ENCODE measurements at regions of chr2 and their contacts with region 1.

Region 1: DNA sequence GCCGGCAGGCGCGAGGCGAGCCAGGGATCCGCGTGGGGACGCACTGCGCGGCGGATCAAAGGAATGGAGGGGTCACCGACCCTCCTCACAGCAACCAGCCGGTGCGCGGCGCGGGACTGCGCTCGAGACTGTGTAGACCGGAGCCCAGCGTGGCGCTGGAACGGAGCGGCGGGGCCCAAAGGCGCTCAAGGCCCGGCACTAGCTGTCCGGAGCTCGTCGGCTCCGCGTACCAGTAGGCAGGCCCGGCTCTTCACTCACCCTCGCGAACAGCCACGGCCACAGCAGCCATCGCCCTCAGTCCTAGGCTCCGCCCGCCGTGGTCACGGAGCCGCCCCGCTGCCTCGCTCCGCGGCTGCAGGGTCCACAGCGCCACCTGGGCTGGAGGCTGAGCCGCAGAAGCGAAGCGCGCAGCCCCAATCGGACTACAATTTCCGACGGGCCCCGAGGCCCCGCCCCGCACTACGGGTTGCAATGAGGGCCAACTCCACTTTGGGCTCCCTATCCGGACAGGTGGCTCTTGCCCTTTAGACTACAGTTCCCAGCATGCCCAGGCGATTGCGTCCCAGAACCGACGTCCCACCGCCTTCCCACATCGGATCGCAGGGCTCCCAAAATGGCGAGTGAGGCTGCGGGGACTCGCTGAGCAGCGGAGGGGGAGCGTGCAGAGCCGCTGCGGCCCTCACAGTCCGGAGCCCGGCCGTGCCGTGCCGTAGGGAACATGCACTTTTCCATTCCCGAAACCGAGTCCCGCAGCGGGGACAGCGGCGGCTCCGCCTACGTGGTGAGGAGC is at the starts of genes EIF2B4 and SNX17:
- H3K4me3 Mint-ChIP-seq: peak within 1 kb of the TSS; percentile 98
- H3K27ac Mint-ChIP-seq: peak within 1 kb of the TSS; percentile 95
- H3K4me1 Mint-ChIP-seq: peaks cover 58% of the 10 kb centered on the region
- H3K27me3 Mint-ChIP-seq: no peaks in the 10 kb centered on the region

Region 2: DNA sequence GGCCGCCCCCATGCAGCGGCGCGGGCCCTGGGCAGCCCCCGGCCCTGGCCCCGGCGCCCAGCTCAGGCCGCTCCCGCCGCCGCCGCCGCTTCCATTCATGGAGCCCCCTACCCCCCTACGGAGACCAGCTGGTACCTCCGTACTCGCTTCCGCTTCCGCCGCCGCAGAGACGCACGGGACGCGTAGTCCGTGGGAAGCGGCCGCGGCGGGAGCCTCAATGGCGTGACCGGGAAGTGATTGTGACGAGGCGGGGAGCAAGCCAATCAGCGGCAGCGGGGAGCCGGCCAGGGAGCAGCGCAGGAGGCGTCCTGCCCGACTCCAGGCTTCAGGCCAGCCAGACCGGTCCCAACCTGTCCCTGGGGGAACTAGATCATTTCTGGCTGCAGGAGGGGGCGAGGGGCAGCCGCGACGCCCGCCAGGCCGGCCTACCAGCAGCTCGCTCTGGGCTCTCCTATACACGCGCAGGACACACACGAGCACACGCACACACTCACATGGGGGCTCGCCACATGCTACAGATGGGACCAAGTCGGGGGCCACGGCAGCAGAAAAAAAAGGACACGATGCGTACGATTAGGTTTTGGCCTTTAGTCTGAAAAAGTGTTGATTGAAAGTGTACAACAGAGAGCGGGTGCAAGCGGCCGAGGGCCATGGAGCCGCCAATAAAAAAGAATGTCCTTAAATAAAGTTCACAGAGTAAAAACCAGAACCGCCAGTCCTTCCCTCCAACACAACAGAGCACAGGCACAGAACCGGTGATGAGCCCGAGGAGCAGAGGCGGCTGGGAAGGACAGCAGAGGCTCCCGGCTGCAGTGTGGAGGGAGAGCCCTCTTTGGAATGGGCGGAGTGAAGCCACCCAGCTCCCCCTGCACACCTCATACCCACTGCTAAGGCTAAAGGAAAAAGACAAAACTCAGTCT is 10.7 kb after region 1 on chr2 and contains the start of gene ZNF513:
- intact Hi-C with region 1: loop called (anchors 1 kb)
- H3K4me3 Mint-ChIP-seq: peak within 1 kb of the TSS; percentile 90
- H3K27ac Mint-ChIP-seq: peak within 1 kb of the TSS; percentile 97
- H3K4me1 Mint-ChIP-seq: peaks cover 81% of the 10 kb centered on the region
- H3K27me3 Mint-ChIP-seq: no peaks in the 10 kb centered on the region

Region 3: GRCh38 chr2:27428213-27428977 is 58.2 kb after region 1 on chr2 and contains the start of gene NRBP1:
- intact Hi-C with region 1: loop called (anchors 2 kb)
- H3K4me3 Mint-ChIP-seq: peak within 1 kb of the TSS; percentile 96
- H3K27ac Mint-ChIP-seq: peak within 1 kb of the TSS; percentile 99
- H3K4me1 Mint-ChIP-seq: peaks cover 38% of the 10 kb centered on the region
- H3K27me3 Mint-ChIP-seq: no peaks in the 10 kb centered on the region

Measured in dendritic cell treated with granulocyte-macrophage colony-stimulating factor and Interleukin-4, amounts not matched to agents 40 ng/mL and 50 ng/mL, for 4 days (primary cell).